MCF 10A (cell line): ENCODE measurements at regions of chr2 and their contacts with region 1.

Region 1: DNA sequence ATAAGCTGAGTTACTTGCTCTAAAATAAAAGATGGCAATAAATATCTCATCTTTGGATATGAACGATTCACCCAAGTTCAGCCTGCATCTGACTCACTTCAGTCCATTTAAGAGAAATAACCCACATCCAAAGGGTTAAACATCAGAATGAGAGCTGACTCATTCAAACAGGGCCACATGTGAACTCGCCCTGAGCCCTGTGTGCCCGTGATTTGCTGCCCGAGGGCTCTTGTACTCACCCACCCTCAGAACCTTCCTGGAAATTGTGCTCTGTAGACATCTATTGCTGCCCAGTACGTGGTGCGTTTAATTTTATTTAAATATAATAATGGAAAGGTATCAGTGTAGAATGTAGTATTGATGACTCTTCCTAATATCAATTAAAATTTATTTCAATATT is 66.9 kb upstream of the RBM44 start:
- DNase-seq: peak; percentile 86
- H3K4me3 Mint-ChIP-seq: peak overlapping the region; percentile 45
- H3K27ac Mint-ChIP-seq: peak overlapping the region; percentile 62
- H3K4me1 Mint-ChIP-seq: peaks cover 34% of the 10 kb centered on the region
- H3K27me3 Mint-ChIP-seq: no peaks in the 10 kb centered on the region
- CTCF ChIP-seq: no peak

Region 2: DNA sequence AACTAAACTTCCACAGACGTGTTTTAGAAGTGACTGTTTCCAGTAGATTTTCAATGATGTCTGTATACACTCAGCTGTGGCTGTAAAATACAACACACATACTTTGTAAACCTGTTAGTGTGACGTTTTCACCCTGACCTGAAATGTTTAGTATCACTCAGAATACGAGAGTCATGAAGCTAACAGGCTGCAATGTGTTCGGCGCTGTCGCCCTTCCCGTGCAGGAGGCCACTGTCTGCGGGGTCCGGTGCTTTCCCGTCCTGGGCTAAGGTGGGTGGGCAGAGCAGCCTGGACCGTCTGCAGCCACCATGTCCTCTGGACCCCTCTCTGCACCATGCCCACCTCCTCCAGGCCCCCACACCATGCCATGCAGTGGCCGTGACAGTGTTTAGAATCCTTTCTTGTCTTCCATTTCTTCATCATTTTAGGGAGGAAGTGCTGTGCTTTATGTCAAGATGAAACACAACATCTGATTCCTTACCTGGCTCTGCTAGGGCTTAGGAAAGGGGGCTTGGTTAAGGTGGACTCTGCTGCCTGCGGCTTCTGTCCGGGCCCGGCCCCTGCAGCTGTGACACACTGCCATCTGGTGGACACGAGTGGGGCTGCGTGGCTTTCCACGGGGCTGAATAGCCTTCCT is 13.1 kb after region 1 on chr2:
- CTCF ChIA-PET with region 1: interaction called, 63 read pairs
- POLR2A ChIA-PET with region 1: interaction called, 5 read pairs
- intact Hi-C with region 1: no loop called
- DNase-seq: peak; percentile 55
- H3K4me3 Mint-ChIP-seq: no peak overlapping the region
- H3K27ac Mint-ChIP-seq: peak overlapping the region; percentile 33
- H3K4me1 Mint-ChIP-seq: peaks cover 19% of the 10 kb centered on the region
- H3K27me3 Mint-ChIP-seq: no peaks in the 10 kb centered on the region
- CTCF ChIP-seq: peak; percentile 92

Region 3: DNA sequence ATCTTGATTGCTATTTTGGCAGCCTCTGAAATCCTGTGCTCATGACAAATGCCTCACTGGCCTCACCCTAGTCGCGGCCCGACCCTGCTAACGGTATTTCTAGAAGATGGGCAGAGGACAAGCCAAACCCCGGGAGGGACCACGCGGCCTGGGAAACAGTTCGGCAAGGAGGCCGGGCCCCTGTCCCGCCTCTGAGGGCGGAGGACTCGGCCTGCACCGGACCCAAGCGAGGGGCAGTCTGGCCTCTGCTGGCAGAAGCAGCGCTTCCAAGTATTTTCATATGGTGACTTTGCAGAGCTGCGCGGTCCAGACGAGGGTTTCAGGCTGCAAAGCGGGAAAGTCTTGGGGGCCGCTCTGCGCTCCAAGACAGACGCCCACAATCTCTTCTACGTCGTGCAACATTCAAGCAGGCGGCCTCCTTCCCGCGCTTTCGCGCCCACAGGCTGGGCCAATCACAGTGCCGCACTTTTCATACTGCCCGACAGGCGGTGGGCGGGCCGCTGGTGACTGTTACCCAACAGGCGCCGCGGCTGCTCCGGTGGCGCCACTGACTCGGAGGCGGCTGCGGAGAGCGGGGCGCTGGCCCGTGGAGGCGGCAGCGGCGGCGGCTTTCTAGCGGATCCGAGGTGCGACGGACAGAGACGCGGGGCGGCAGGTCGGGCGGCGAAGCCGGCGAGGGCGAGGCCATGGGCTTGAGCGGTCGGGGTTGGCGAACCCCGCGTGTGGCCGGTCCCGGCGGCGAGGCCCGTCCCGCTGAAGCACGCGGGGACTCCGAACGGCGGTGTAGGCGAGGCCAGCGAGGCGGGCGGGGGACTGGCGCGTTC is 66.8 kb after region 1 on chr2 and contains the start of gene RBM44:
- CTCF ChIA-PET with region 1: no interaction called
- POLR2A ChIA-PET with region 1: no interaction called
- intact Hi-C with region 1: no loop called
- DNase-seq: no peak
- H3K4me3 Mint-ChIP-seq: no peak within 1 kb of the TSS
- H3K27ac Mint-ChIP-seq: no peak within 1 kb of the TSS
- H3K4me1 Mint-ChIP-seq: no peaks in the 10 kb centered on the region
- H3K27me3 Mint-ChIP-seq: no peaks in the 10 kb centered on the region
- CTCF ChIP-seq: no peak
- total RNA-seq, gene RBM44: 0.15 and 0.23 TPM in 2 replicates